Tibial artery (tissue), 4 donors: ENCODE measurements at regions of chr3 and their contacts with region 1.

Region 1: GRCh38 chr3:194315088-194315964 is 35.8 kb downstream of the CPN2 start:
- DNase-seq: peak; percentile 79 to 91
- H3K4me3 ChIP-seq: peak overlapping the region; percentile 35 to 58
- H3K27ac ChIP-seq: peak overlapping the region; percentile 23 to 50
- H3K4me1 ChIP-seq: peaks cover 0 to 35% (median 25%) of the 10 kb centered on the region in 4 donors
- H3K27me3 ChIP-seq: peaks cover 0 to 71% of the 10 kb centered on the region in 2 donors
- CTCF ChIP-seq: peak; percentile 96 to 97

Region 2: GRCh38 chr3:193665370-193665989 is 649.8 kb before region 1 on chr3:
- intact Hi-C with region 1: loop called (anchors 10 kb)
- DNase-seq: no peak
- H3K4me3 ChIP-seq: no peak overlapping the region
- H3K27ac ChIP-seq: no peak overlapping the region
- H3K4me1 ChIP-seq: no peaks in the 10 kb centered on the region
- H3K27me3 ChIP-seq: no peaks in the 10 kb centered on the region
- CTCF ChIP-seq: peak in 1 of 2 experiments; percentile 38

Region 3: DNA sequence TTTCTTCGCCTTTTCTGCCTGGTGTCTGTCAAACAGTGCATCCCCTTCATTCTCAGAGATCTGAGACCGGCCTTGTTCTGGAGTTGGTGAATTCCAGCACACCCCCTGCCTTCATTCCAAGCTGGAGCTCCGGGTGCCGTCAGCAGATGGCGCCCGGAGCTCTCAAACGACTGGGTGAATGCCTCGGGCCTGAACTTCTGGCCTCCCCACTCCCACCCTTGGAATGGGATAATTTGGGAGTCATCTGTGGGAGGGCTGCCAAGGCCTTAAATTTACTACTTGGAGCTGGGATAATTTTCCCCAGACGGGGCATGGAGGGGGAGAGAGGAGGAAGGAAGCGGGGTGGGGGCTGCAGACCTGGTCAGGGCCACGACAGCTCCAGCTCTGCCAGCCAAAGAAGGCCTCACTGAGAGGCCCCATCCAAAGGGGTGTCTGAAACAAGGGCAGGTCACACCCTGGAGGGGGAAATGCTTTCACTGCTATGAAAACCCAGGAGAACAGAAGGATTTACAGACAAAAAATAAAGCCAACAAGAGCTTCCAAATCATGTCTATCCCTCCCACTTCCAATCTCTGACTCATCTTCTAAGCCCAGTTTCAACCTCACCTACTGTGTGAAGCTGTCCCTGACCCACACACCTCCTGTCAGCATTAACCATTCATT is 534.4 kb before region 1 on chr3:
- intact Hi-C with region 1: loop called (anchors 2 kb)
- DNase-seq: peak; percentile 60 to 74
- H3K4me3 ChIP-seq: no peak overlapping the region
- H3K27ac ChIP-seq: no peak overlapping the region
- H3K4me1 ChIP-seq: peaks cover 0 to 10% (median 6%) of the 10 kb centered on the region in 4 donors
- H3K27me3 ChIP-seq: peaks cover 0 to 50% of the 10 kb centered on the region in 2 donors
- CTCF ChIP-seq: peak; percentile 70 to 74

Region 4: DNA sequence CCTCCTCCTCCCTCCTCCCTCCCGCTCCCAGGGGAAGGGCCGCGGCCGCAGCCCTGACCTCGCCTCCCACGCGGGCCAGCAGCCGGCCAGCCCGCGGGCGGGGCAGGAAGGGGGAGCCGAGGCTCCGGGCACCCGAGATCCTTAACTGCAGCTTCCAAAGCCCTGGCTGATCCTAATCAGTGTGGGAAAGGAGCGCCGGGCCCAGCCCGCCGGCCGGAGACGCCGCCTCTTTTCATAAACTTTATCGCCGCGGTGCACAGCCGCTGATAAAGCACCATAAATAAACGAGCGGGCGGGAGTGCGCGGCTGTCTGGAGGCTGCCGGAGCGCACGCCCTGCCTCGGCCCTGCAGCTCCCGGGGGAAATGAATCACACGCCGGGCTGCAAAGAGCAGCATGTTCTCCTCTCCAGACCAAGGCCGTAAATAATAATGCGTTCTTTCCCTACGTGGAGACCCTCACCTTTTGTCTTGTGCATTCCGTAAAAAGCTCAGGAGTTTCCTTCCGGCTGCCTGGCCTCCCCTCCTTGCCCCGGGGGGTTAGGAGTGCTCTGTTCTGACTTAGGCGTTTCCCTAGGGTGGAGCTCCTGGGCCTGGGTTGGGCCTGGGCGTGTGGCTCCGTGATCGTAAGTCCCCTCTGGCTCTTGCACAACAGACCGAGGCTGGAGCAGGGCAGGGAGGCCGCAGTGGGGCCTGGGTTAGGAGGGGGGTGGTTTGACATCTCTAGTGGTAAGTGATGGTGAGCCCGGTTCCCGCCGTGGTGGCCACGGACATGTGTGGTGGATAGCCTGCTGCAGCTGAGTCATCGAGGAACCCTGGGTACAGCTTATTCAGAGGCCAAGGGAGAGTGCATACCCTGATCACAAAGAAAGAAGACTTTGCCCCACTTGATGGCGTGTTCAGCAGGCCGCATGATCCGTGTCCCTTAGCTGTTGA is 311.9 kb before region 1 on chr3:
- intact Hi-C with region 1: loop called (anchors 5 kb)
- DNase-seq: peak; percentile 96 to 98
- H3K4me3 ChIP-seq: peak overlapping the region; percentile 36 to 48
- H3K27ac ChIP-seq: peak overlapping the region; percentile 60 to 85
- H3K4me1 ChIP-seq: peaks cover 5 to 28% (median 19%) of the 10 kb centered on the region in 4 donors
- H3K27me3 ChIP-seq: peaks cover 0 to 22% of the 10 kb centered on the region in 2 donors
- CTCF ChIP-seq: no peak

Region 5: GRCh38 chr3:194141415-194142155 is 173.7 kb before region 1 on chr3:
- intact Hi-C with region 1: loop called (anchors 10 kb)
- DNase-seq: peak; percentile 87 to 97
- H3K4me3 ChIP-seq: peak overlapping the region; percentile 51 to 62
- H3K27ac ChIP-seq: peak overlapping the region; percentile 90 to 99
- H3K4me1 ChIP-seq: peaks cover 0 to 46% (median 37%) of the 10 kb centered on the region in 4 donors
- H3K27me3 ChIP-seq: no peaks in the 10 kb centered on the region
- CTCF ChIP-seq: no peak